ENCODE measurements at regions of chr12 and their contacts with region 1.

Region 1: DNA sequence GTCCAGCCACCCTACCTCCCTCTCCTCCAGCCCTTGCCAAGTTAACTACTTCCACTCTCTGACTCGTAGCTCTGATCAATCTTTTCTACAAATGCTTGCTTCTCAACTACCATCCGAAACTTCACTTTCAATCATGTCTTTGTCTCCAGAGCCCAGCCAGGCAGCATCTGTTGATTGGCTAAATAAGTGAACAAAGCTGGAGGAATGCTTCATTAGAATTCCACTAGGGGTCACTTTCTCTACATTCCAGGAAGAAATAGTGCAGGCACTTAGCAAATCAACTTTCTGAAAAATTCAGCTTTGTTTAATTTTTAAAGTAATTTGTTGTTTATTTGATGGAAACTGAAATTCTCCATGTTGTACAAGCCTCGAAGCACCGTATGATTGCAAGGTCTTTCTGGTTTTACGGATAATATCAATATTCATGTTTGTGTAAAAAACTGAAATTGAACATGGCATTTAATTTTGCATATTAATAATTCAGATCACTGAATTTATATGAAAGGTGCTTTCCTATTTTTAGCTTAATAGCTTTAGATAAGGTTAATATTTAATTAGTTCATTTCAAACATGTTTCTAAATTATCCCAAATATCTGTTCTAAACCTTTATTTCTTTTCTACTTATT is 32.4 kb upstream of the HELB start:
- DNase-seq: peak; percentile 37
- CTCF ChIP-seq: peak; percentile 37

Region 2: GRCh38 chr12:66242311-66242710 is 27.6 kb before region 1 on chr12:
- CTCF ChIA-PET with region 1: interaction called, 10 read pairs
- POLR2A ChIA-PET with region 1: no interaction called
- DNase-seq: no peak
- CTCF ChIP-seq: no peak